ENCODE measurements at regions of chr19 and their contacts with region 1.

Region 1: GRCh38 chr19:14405758-14406644 is 13.1 kb downstream of the DDX39A start:
- DNase-seq: peak; percentile 83 to 94 (median 91)
- ATAC-seq: peak; percentile 57 to 79
- H3K4me3 Mint-ChIP-seq: peak overlapping the region in 3 of 10 donors; percentile 29 to 43 (median 30)
- H3K27ac Mint-ChIP-seq: peak overlapping the region; percentile 57 to 92 (median 78)
- H3K4me1 Mint-ChIP-seq: peaks cover 12 to 37% (median 28%) of the 10 kb centered on the region in 4 donors
- H3K27me3 Mint-ChIP-seq: no peaks in the 10 kb centered on the region

Region 2: DNA sequence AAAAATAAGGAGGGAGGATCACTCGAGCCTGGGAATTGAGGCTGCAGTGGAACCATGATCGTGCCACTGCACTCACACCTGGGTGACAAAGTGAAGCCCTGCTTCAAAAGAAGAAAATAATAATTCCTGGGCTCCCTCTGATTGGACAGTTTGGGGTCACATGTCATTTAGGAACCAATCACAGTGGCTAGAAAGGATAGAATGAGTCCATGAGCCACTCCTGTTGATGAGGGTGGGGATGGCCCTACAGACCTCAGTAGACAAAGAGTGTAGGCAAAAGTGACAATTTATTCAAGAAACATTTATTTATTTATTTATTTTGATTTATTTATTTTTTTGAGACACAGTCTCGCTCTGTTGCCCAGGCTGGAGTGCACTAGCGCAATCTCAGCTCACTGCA is 51.6 kb before region 1 on chr19:
- POLR2A ChIA-PET with region 1: interaction called, 115 read pairs
- DNase-seq: no peak
- ATAC-seq: no peak
- H3K4me3 Mint-ChIP-seq: no peak overlapping the region
- H3K27ac Mint-ChIP-seq: peak overlapping the region in 4 of 10 donors; percentile 24 to 99 (median 82)
- H3K4me1 Mint-ChIP-seq: peaks cover 12 to 41% (median 30%) of the 10 kb centered on the region in 4 donors
- H3K27me3 Mint-ChIP-seq: no peaks in the 10 kb centered on the region

Region 3: DNA sequence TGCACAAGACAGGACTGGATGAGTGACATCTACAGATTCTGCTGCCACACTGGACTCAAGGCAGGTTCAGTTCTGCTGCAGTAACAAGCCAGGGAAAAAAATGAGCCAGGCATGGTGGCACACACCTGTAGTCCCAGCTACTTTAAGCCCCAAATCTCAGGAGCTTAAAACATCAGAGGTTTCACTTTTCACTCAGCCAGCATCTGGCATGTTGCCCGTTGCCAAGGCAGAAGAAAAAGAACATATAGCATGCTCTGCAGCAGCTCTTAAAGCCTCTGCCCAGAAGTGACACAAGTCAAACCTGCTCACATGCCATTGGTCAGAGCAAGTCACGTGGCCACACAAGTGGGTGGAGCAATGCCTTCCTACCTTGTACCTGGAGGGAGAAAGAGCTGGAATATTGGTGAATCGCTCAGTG is 39.5 kb before region 1 on chr19:
- POLR2A ChIA-PET with region 1: interaction called, 115 read pairs
- DNase-seq: peak; percentile 84 to 97 (median 94)
- ATAC-seq: peak; percentile 56 to 60
- H3K4me3 Mint-ChIP-seq: peak overlapping the region; percentile 53 to 89 (median 74)
- H3K27ac Mint-ChIP-seq: peak overlapping the region; percentile 89 to 100 (median 100)
- H3K4me1 Mint-ChIP-seq: peaks cover 37 to 85% (median 74%) of the 10 kb centered on the region in 4 donors
- H3K27me3 Mint-ChIP-seq: no peaks in the 10 kb centered on the region

Region 4: DNA sequence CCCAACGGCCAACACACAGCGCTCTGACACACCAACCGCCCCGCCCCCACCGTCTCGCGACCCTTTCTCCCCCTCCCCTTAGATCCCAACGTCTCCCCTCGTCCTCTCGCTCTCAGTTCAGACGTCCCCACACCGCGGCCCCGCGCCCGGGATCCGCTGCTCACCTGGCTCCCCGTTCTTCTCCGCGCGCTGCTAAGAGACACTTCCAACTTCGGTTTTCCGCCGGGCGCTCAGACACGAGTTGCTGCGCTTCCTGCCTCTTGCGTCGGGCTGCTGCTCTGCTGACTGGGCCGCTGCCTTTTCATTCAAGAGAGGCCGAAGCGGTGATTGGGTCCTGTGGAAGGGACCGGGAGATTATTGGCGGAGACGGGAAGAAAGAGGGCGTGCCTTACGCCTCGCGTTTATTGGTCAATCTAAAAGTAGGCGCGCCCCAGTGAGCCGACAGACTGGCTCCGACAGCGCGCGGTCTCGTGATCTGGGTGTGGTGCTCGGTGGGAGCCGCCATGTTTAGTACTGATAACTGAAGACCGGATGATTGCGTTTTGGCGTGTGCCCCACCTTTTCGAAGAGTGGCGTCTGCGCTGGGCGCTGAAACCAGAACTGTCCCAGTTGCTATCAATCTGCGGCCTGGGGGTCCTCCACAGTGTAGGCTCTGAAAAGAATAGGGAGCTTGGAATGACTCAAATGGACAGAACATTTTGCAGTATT is 13.3 kb after region 1 on chr19 and contains the start of gene DDX39A:
- POLR2A ChIA-PET with region 1: interaction called, 13 read pairs
- DNase-seq: peak; percentile 85 to 99 (median 98)
- ATAC-seq: peak; percentile 87 to 88
- H3K4me3 Mint-ChIP-seq: peak within 1 kb of the TSS; percentile 91 to 100 (median 97)
- H3K27ac Mint-ChIP-seq: peak within 1 kb of the TSS; percentile 95 to 100 (median 98)
- H3K4me1 Mint-ChIP-seq: peaks cover 21 to 41% (median 40%) of the 10 kb centered on the region in 4 donors
- H3K27me3 Mint-ChIP-seq: no peaks in the 10 kb centered on the region
- polyA plus RNA-seq, gene DDX39A: 96.0 to 136 (median 106) TPM

Measured in naive thymus-derived CD8-positive, alpha-beta T cell (primary cell).